Ovary (tissue), 10 donors: ENCODE measurements at regions of chr1 and their contacts with region 1.

Region 1: GRCh38 chr1:87426463-87427249 is 98.0 kb downstream of the LMO4 start:
- DNase-seq: no peak
- H3K4me3 ChIP-seq: no peak overlapping the region
- H3K27ac ChIP-seq: no peak overlapping the region
- H3K4me1 ChIP-seq: no peaks in the 10 kb centered on the region
- H3K27me3 ChIP-seq: no peaks in the 10 kb centered on the region
- CTCF ChIP-seq: no peak
- EP300 ChIP-seq: no peak
- POLR2A ChIP-seq: no peak

Region 2: GRCh38 chr1:87370539-87370938 is 56.1 kb before region 1 on chr1:
- intact Hi-C with region 1: no loop called
- DNase-seq: no peak
- H3K4me3 ChIP-seq: no peak overlapping the region
- H3K27ac ChIP-seq: no peak overlapping the region
- H3K4me1 ChIP-seq: no peaks in the 10 kb centered on the region
- H3K27me3 ChIP-seq: no peaks in the 10 kb centered on the region
- CTCF ChIP-seq: no peak
- EP300 ChIP-seq: no peak
- POLR2A ChIP-seq: no peak

Region 3: DNA sequence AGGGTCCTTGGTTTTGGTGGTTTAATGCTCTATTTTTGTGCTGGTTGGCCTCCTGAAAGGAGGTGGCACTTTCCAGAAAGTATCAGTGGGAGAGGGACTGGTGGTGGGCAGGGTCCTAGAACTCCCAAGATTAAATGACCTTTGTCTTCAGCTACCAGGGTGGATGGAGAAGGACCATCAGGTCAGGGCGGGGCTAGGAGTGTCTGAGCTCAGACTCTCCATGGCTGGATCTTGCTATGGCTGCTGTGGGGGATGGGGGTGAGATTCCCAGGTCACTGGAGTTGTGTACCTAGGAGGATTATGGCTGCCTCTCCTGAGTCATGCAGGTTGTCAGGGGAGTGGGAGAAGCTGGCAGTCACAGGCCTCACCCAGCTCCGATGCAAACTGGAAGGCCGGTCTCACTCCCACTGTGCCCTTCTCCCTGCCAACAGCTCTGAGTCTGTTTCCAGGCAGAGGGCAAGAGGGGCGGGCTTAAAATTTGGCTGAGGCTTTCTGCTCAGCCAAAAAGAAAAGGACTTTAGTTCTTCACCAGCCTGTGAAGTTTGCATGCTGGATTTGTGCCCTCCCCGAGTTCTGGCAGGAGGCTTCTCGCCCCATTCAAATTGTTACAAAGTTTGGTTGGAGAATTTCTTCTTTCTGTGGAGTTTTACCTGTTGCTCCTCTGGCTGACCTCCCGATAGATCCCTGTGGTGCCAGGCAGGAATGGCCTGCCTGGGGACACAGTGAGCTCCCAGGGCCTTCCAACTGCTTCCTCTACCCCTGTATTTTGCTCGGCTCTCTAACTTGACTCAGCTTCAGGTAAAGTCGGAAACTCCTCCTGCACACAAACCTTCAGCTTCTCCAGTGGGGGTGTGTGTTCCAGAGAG is 1578.9 kb after region 1 on chr1:
- intact Hi-C with region 1: loop called in 1 of 4 experiments (anchors 5 kb)
- DNase-seq: no peak
- H3K4me3 ChIP-seq: no peak overlapping the region
- H3K27ac ChIP-seq: no peak overlapping the region
- H3K4me1 ChIP-seq: no peaks in the 10 kb centered on the region
- H3K27me3 ChIP-seq: no peaks in the 10 kb centered on the region
- CTCF ChIP-seq: no peak
- EP300 ChIP-seq: no peak
- POLR2A ChIP-seq: no peak